CD8-positive, alpha-beta T cell (primary cell): ENCODE measurements at regions of chr6 and their contacts with region 1.

Region 1: DNA sequence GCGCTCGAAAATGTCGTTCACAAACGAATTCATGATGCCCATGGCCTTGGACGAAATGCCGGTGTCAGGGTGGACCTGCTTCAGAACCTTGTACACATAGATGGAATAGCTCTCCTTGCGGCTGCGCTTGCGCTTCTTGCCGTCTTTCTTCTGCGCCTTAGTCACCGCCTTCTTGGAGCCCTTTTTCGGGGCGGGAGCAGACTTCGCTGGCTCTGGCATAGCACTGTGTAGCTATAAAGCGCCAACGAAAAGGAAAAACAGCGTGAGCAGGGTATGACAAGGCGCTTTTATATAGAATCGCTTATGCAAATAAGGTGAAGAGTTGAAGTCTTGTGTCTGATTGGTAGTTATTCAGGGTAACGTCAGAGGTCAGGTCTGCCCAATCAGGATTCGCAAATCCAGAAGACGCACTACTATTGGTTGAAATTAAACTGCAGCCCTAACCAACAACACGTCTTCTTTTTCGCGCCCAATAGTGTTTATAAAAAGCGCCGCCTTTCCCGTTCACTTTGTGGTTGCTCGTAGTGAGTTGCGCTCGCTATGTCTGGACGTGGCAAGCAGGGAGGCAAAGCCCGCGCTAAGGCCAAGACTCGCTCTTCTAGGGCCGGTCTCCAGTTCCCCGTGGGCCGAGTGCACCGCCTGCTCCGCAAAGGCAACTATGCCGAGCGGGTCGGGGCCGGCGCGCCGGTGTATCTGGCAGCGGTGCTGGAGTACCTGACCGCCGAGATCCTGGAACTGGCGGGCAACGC is 114.8 kb upstream of the PRSS16 start:
- DNase-seq: peak; percentile 80 to 99 (median 87)
- ATAC-seq: peak; percentile 82
- H3K4me3 ChIP-seq: peak overlapping the region; percentile 76 to 83
- H3K4me3 Mint-ChIP-seq: no peak overlapping the region
- H3K27ac ChIP-seq: peak overlapping the region; percentile 86 to 92
- H3K27ac Mint-ChIP-seq: no peak overlapping the region
- H3K4me1 ChIP-seq: peaks cover 15% of the 10 kb centered on the region
- H3K4me1 Mint-ChIP-seq: peaks cover 21% of the 10 kb centered on the region
- H3K27me3 ChIP-seq: no peaks in the 10 kb centered on the region
- H3K27me3 Mint-ChIP-seq: no peaks in the 10 kb centered on the region
- CTCF ChIP-seq: no peak

Region 2: GRCh38 chr6:26045065-26045927 is 1087.4 kb before region 1 on chr6:
- CTCF ChIA-PET with region 1: no interaction called
- POLR2A ChIA-PET with region 1: interaction called, 11 read pairs
- intact Hi-C with region 1: loop called in 1 of 2 experiments (anchors 5 kb)
- DNase-seq: peak; percentile 54 to 93 (median 79)
- ATAC-seq: peak; percentile 59
- H3K4me3 ChIP-seq: peak overlapping the region; percentile 67 to 76
- H3K4me3 Mint-ChIP-seq: peak overlapping the region; percentile 89
- H3K27ac ChIP-seq: peak overlapping the region; percentile 73 to 81
- H3K27ac Mint-ChIP-seq: peak overlapping the region; percentile 98
- H3K4me1 ChIP-seq: peaks cover 7% of the 10 kb centered on the region
- H3K4me1 Mint-ChIP-seq: peaks cover 14% of the 10 kb centered on the region
- H3K27me3 ChIP-seq: no peaks in the 10 kb centered on the region
- H3K27me3 Mint-ChIP-seq: no peaks in the 10 kb centered on the region
- CTCF ChIP-seq: no peak

Region 3: DNA sequence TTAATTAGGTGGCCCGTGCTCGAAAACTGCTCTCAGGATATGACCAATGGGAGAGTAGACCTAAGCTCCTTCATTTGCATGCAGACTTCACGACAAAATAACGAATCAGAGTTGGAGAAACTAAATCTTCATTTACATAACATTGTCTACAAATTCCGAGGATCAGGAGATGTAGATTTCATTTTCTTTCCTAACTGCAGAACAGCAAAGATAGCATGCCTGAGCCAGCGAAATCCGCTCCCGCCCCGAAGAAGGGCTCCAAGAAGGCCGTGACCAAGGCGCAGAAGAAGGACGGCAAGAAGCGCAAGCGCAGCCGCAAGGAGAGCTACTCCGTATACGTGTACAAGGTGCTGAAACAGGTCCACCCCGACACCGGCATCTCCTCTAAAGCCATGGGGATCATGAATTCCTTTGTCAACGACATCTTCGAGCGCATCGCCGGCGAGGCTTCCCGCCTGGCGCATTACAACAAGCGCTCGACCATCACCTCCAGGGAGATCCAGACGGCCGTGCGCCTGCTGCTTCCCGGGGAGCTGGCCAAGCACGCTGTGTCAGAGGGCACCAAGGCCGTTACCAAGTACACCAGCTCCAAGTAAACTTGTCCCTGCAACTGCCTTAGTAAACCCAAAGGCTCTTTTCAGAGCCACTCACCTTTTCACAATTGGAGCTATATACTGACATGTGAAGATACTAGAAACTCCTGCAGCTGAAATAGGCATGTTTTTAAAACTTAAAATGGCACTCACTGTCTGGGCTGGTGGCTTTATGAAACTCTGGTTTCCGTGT is 948.9 kb before region 1 on chr6:
- CTCF ChIA-PET with region 1: interaction called, 3 read pairs
- POLR2A ChIA-PET with region 1: interaction called, 11 read pairs
- intact Hi-C with region 1: no loop called
- DNase-seq: peak in 7 of 9 experiments; percentile 33 to 90 (median 59)
- ATAC-seq: peak; percentile 88
- H3K4me3 ChIP-seq: peak overlapping the region; percentile 60 to 71
- H3K4me3 Mint-ChIP-seq: peak overlapping the region; percentile 100
- H3K27ac ChIP-seq: peak overlapping the region; percentile 61 to 76
- H3K27ac Mint-ChIP-seq: peak overlapping the region; percentile 99
- H3K4me1 ChIP-seq: peaks cover 20% of the 10 kb centered on the region
- H3K4me1 Mint-ChIP-seq: peaks cover 42% of the 10 kb centered on the region
- H3K27me3 ChIP-seq: no peaks in the 10 kb centered on the region
- H3K27me3 Mint-ChIP-seq: no peaks in the 10 kb centered on the region
- CTCF ChIP-seq: no peak

Region 4: GRCh38 chr6:26662642-26663041 is 470.1 kb before region 1 on chr6:
- CTCF ChIA-PET with region 1: no interaction called
- POLR2A ChIA-PET with region 1: no interaction called
- intact Hi-C with region 1: no loop called
- DNase-seq: no peak
- ATAC-seq: no peak
- H3K4me3 ChIP-seq: no peak overlapping the region
- H3K4me3 Mint-ChIP-seq: no peak overlapping the region
- H3K27ac ChIP-seq: no peak overlapping the region
- H3K27ac Mint-ChIP-seq: no peak overlapping the region
- H3K4me1 ChIP-seq: peaks cover 9% of the 10 kb centered on the region
- H3K4me1 Mint-ChIP-seq: peaks cover 12% of the 10 kb centered on the region
- H3K27me3 ChIP-seq: peaks cover 0 to 11% of the 10 kb centered on the region in 2 experiments
- H3K27me3 Mint-ChIP-seq: peaks cover 38% of the 10 kb centered on the region
- CTCF ChIP-seq: no peak

Region 5: DNA sequence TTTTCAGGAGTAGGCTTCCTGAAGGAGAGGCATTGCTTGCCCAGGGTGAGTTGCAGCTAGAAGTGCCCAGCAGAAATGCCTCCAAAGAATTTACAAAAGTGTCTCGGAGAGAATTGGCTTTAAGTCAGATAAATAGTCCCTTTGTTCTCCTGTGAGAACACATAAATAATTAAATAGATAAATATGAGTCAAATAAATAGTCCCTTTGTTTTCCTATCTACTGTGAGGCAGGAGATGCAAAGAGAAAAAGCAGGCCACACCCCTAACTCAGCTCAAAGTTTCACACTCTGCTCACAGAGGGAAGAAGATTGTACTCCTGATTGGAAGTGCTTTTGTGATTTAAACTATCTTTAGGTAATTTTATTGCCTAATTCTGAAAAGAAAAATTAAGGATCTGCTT is 65.9 kb before region 1 on chr6:
- CTCF ChIA-PET with region 1: no interaction called
- POLR2A ChIA-PET with region 1: no interaction called
- intact Hi-C with region 1: no loop called
- DNase-seq: no peak
- ATAC-seq: no peak
- H3K4me3 ChIP-seq: no peak overlapping the region
- H3K4me3 Mint-ChIP-seq: no peak overlapping the region
- H3K27ac ChIP-seq: no peak overlapping the region
- H3K27ac Mint-ChIP-seq: no peak overlapping the region
- H3K4me1 ChIP-seq: no peaks in the 10 kb centered on the region
- H3K4me1 Mint-ChIP-seq: no peaks in the 10 kb centered on the region
- H3K27me3 ChIP-seq: peaks cover 0 to 2% of the 10 kb centered on the region in 2 experiments
- H3K27me3 Mint-ChIP-seq: peaks cover 23% of the 10 kb centered on the region
- CTCF ChIP-seq: no peak

Region 6: DNA sequence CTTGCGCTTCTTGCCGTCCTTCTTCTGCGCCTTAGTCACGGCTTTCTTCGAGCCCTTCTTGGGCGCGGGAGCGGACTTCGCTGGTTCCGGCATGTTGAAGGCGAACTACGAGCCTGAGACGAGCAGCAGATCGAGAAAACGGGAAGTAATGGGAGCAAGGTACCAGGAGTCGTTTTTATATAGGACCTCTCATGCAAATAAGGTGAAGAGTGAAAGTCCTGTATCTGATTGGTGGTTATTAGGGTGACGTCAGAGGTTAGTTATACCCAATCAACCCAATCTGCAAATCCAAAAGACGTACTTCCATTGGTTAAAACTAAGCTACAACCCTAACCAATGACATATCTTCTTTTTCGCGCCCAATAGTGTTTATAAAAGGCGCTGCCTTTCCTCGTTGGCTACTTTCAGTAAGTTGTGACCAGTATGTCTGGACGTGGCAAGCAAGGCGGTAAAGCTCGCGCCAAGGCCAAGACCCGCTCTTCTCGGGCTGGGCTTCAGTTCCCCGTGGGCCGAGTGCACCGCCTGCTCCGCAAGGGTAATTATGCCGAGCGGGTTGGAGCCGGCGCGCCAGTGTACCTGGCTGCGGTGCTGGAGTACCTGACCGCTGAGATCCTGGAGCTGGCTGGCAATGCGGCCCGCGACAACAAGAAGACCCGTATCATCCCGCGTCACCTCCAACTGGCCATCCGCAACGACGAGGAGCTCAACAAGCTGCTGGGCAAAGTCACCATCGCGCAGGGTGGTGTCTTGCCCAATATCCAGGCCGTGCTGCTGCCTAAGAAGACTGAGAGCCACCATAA is 14.2 kb after region 1 on chr6:
- CTCF ChIA-PET with region 1: interaction called, 49 read pairs
- POLR2A ChIA-PET with region 1: interaction called, 333 read pairs
- intact Hi-C with region 1: loop called (anchors 1 kb)
- DNase-seq: peak; percentile 56 to 98 (median 74)
- ATAC-seq: peak; percentile 85
- H3K4me3 ChIP-seq: peak overlapping the region; percentile 71 to 77
- H3K4me3 Mint-ChIP-seq: no peak overlapping the region
- H3K27ac ChIP-seq: peak overlapping the region; percentile 84 to 91
- H3K27ac Mint-ChIP-seq: no peak overlapping the region
- H3K4me1 ChIP-seq: peaks cover 11% of the 10 kb centered on the region
- H3K4me1 Mint-ChIP-seq: peaks cover 13% of the 10 kb centered on the region
- H3K27me3 ChIP-seq: no peaks in the 10 kb centered on the region
- H3K27me3 Mint-ChIP-seq: no peaks in the 10 kb centered on the region
- CTCF ChIP-seq: no peak

Region 7: DNA sequence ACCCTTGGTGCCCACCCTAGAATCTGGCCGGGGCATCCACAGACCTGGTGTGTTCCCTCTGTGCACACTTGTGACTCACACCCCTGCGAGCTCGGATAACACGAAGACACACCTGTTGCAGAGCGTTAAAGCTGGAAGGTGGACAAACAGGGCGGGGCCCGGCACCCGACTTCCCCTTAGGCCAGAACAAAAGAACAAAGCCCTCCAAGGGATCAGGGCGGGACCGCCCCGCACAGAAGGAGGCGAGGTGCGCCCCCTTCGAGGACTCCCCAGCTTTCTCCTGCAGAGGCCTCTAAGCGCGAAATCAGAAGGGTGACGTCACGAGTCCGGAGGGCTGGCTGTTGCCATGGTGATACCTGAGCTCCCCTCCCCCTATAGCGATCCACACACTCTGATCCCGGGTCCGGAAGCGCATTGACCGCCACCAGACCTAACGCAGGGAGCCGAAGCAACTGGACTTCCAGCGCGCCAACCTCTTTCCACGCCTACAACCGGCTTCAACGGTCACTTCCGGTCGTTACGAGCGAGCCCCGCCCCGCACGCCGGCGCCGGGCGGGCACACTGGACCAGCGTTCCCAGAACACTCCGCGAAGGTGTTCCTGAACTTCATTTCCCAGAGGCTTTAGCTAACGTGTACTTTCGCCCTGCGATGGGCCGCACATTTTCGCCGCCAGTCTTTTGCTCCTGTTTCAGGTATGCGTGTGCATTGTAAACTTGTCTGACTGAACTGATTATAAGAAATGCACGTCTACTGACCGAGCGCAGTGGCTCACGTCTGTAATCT is 340.1 kb after region 1 on chr6 and contains the start of gene ZNF184:
- CTCF ChIA-PET with region 1: no interaction called
- POLR2A ChIA-PET with region 1: interaction called, 16 read pairs
- intact Hi-C with region 1: loop called (anchors 1 to 2 kb)
- DNase-seq: peak; percentile 71 to 94 (median 84)
- ATAC-seq: peak; percentile 63
- H3K4me3 ChIP-seq: peak within 1 kb of the TSS; percentile 80 to 90
- H3K4me3 Mint-ChIP-seq: peak within 1 kb of the TSS; percentile 96
- H3K27ac ChIP-seq: peak within 1 kb of the TSS; percentile 94 to 96
- H3K27ac Mint-ChIP-seq: peak within 1 kb of the TSS; percentile 96
- H3K4me1 ChIP-seq: peaks cover 26% of the 10 kb centered on the region
- H3K4me1 Mint-ChIP-seq: peaks cover 48% of the 10 kb centered on the region
- H3K27me3 ChIP-seq: no peaks in the 10 kb centered on the region
- H3K27me3 Mint-ChIP-seq: no peaks in the 10 kb centered on the region
- CTCF ChIP-seq: no peak
- total RNA-seq, gene ZNF184: 31.8 to 32.9 TPM

Region 8: DNA sequence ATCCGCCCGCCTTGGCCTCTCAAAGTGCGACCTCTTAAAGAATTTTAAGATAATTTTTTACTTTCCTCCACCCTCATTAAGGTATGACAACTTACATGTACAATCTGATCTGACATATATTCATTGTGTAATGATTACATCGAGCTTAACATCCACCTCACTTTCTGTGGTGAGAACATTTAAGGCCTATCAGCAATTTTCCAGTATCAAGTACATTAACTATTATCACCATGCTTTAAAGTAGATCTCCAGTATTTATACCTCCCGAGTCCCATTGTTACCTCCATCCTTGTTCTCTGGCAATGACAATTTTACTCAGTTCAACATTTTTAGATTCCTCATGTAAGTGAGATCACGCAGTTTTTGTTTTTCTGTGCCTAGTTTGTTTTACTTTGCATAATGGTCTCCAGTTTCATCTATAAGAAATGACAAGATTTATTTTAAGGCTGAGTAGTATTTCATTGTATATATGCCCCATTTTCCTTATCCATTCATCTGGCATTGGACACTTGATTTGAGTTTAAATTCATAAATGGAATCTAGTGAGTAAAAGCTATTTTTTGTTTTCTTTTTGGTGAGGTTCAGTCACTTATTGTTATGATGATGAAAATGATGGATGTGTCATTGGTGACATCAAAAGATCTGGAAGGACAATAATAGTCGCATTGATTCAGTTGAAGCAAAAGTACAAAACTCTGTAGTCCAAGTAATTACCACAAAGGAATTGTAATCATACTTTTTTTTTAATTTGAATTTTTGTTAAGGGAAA is 692.5 kb after region 1 on chr6:
- CTCF ChIA-PET with region 1: no interaction called
- POLR2A ChIA-PET with region 1: interaction called, 13 read pairs
- intact Hi-C with region 1: no loop called
- DNase-seq: peak in 1 of 9 experiments; percentile 45
- ATAC-seq: peak; percentile 6
- H3K4me3 ChIP-seq: peak overlapping the region; percentile 55 to 76
- H3K4me3 Mint-ChIP-seq: peak overlapping the region; percentile 89
- H3K27ac ChIP-seq: peak overlapping the region; percentile 81 to 91
- H3K27ac Mint-ChIP-seq: peak overlapping the region; percentile 99
- H3K4me1 ChIP-seq: peaks cover 24% of the 10 kb centered on the region
- H3K4me1 Mint-ChIP-seq: peaks cover 32% of the 10 kb centered on the region
- H3K27me3 ChIP-seq: no peaks in the 10 kb centered on the region
- H3K27me3 Mint-ChIP-seq: no peaks in the 10 kb centered on the region
- CTCF ChIP-seq: no peak

Region 9: GRCh38 chr6:28863604-28864320 is 1731.1 kb after region 1 on chr6:
- CTCF ChIA-PET with region 1: no interaction called
- POLR2A ChIA-PET with region 1: interaction called, 9 read pairs
- intact Hi-C with region 1: loop called (anchors 1 to 10 kb)
- DNase-seq: peak; percentile 62 to 93 (median 82)
- ATAC-seq: peak; percentile 35
- H3K4me3 ChIP-seq: peak overlapping the region; percentile 80 to 92
- H3K4me3 Mint-ChIP-seq: peak overlapping the region; percentile 96
- H3K27ac ChIP-seq: peak overlapping the region; percentile 44 to 70
- H3K27ac Mint-ChIP-seq: peak overlapping the region; percentile 94
- H3K4me1 ChIP-seq: peaks cover 14% of the 10 kb centered on the region
- H3K4me1 Mint-ChIP-seq: peaks cover 45% of the 10 kb centered on the region
- H3K27me3 ChIP-seq: no peaks in the 10 kb centered on the region
- H3K27me3 Mint-ChIP-seq: no peaks in the 10 kb centered on the region
- CTCF ChIP-seq: no peak